CD4-positive, alpha-beta memory T cell (primary cell): ENCODE measurements at regions of chr18 and their contacts with region 1.

Region 1: GRCh38 chr18:48777026-48777743 is 173.6 kb downstream of the SMAD7 start:
- DNase-seq: peak; percentile 64 to 75 (median 70)
- H3K4me3 ChIP-seq: no peak overlapping the region
- H3K4me3 Mint-ChIP-seq: no peak overlapping the region
- H3K27ac ChIP-seq: no peak overlapping the region
- H3K27ac Mint-ChIP-seq: peak overlapping the region in 1 of 7 donors; percentile 74
- H3K4me1 ChIP-seq: peaks cover 10% of the 10 kb centered on the region
- H3K4me1 Mint-ChIP-seq: peaks cover 4 to 18% (median 5%) of the 10 kb centered on the region in 4 donors
- H3K27me3 ChIP-seq: no peaks in the 10 kb centered on the region
- H3K27me3 Mint-ChIP-seq: no peaks in the 10 kb centered on the region

Region 2: DNA sequence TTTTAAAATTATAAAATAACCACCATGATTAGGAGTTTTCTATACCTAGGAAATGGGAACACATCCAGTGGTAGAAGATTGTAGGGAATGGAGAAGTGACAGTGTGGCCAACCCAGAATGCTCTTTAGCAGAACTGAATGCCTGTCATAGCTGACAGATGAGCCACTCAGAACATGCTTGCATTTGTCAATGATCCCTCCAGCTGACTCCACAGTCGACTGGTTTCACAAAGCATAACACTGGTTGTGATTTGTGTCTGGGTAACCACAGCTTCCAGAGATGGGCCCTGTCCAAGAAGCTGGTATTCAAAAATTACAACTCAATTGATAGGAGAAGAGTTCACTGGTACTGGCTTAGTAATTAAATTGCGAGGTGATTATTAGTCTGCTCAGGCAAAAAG is 247.4 kb before region 1 on chr18:
- CTCF ChIA-PET with region 1: no interaction called
- POLR2A ChIA-PET with region 1: no interaction called
- intact Hi-C with region 1: no loop called
- DNase-seq: no peak
- H3K4me3 ChIP-seq: no peak overlapping the region
- H3K4me3 Mint-ChIP-seq: no peak overlapping the region
- H3K27ac ChIP-seq: no peak overlapping the region
- H3K27ac Mint-ChIP-seq: no peak overlapping the region
- H3K4me1 ChIP-seq: no peaks in the 10 kb centered on the region
- H3K4me1 Mint-ChIP-seq: peaks cover 0 to 5% (median under 1%) of the 10 kb centered on the region in 4 donors
- H3K27me3 ChIP-seq: no peaks in the 10 kb centered on the region
- H3K27me3 Mint-ChIP-seq: peaks cover 19 to 20% of the 10 kb centered on the region in 2 donors

Region 3: DNA sequence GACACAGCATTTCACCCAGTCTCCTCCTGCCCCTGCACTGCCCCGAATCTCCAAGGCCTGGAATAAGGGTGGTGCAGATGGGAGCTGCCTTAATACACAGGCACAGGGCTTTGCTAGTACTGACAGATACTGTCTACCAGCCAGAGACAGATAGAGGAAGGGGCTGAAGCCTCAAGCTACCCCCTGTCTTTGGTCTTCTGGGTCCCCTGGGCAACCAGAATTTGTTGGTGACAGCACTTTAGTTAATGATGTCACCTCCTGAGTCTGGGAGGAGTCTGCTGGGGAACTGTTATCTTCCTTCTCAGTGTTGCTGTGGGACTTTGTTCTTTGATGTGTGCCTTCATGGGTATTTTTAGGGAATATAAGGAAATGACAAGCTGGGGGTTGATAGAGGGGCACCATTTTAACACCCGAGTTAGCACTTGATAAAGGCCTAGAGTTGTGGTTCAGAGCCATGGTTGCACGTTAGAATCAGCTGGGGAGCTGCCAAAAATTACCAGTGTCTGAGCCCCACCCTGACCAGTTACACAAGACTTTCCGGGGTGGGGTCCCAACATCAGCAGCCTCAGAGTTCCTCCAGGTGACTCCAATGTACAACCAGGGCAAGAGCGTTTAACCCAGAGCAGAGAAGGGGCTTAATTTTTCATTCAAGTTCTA is 36.8 kb after region 1 on chr18:
- CTCF ChIA-PET with region 1: interaction called, 18 read pairs
- POLR2A ChIA-PET with region 1: interaction called, 8 read pairs
- intact Hi-C with region 1: no loop called
- DNase-seq: peak; percentile 71 to 86 (median 80)
- H3K4me3 ChIP-seq: no peak overlapping the region
- H3K4me3 Mint-ChIP-seq: peak overlapping the region; percentile 22 to 86 (median 59)
- H3K27ac ChIP-seq: peak overlapping the region; percentile 82
- H3K27ac Mint-ChIP-seq: peak overlapping the region; percentile 91 to 99 (median 97)
- H3K4me1 ChIP-seq: peaks cover 47% of the 10 kb centered on the region
- H3K4me1 Mint-ChIP-seq: peaks cover 41 to 66% (median 54%) of the 10 kb centered on the region in 4 donors
- H3K27me3 ChIP-seq: no peaks in the 10 kb centered on the region
- H3K27me3 Mint-ChIP-seq: no peaks in the 10 kb centered on the region

Region 4: GRCh38 chr18:48913201-48913600 is 136.0 kb after region 1 on chr18:
- CTCF ChIA-PET with region 1: interaction called, 127 read pairs
- POLR2A ChIA-PET with region 1: interaction called, 7 read pairs
- intact Hi-C with region 1: loop called (anchors 1 kb)
- DNase-seq: peak; percentile 56 to 68 (median 62)
- H3K4me3 ChIP-seq: no peak overlapping the region
- H3K4me3 Mint-ChIP-seq: no peak overlapping the region
- H3K27ac ChIP-seq: no peak overlapping the region
- H3K27ac Mint-ChIP-seq: peak overlapping the region in 3 of 7 donors; percentile 73 to 89 (median 81)
- H3K4me1 ChIP-seq: peaks cover 14% of the 10 kb centered on the region
- H3K4me1 Mint-ChIP-seq: peaks cover 16 to 48% (median 24%) of the 10 kb centered on the region in 4 donors
- H3K27me3 ChIP-seq: no peaks in the 10 kb centered on the region
- H3K27me3 Mint-ChIP-seq: peaks cover 0 to 1% of the 10 kb centered on the region in 2 donors

Region 5: GRCh38 chr18:49041435-49042245 is 264.5 kb after region 1 on chr18:
- CTCF ChIA-PET with region 1: interaction called, 58 read pairs
- POLR2A ChIA-PET with region 1: no interaction called
- intact Hi-C with region 1: loop called (anchors 1 kb)
- DNase-seq: peak in 4 of 5 donors; percentile 34 to 52 (median 42)
- H3K4me3 ChIP-seq: no peak overlapping the region
- H3K4me3 Mint-ChIP-seq: no peak overlapping the region
- H3K27ac ChIP-seq: no peak overlapping the region
- H3K27ac Mint-ChIP-seq: peak overlapping the region in 1 of 7 donors; percentile 8
- H3K4me1 ChIP-seq: no peaks in the 10 kb centered on the region
- H3K4me1 Mint-ChIP-seq: peaks cover 0 to 6% (median 0%) of the 10 kb centered on the region in 4 donors
- H3K27me3 ChIP-seq: no peaks in the 10 kb centered on the region
- H3K27me3 Mint-ChIP-seq: no peaks in the 10 kb centered on the region

Region 6: GRCh38 chr18:49238433-49239042 is 461.4 kb after region 1 on chr18:
- CTCF ChIA-PET with region 1: no interaction called
- POLR2A ChIA-PET with region 1: no interaction called
- intact Hi-C with region 1: loop called (anchors 2 kb)
- DNase-seq: peak in 3 of 5 donors; percentile 4 to 18 (median 11)
- H3K4me3 ChIP-seq: no peak overlapping the region
- H3K4me3 Mint-ChIP-seq: no peak overlapping the region
- H3K27ac ChIP-seq: no peak overlapping the region
- H3K27ac Mint-ChIP-seq: peak overlapping the region in 2 of 7 donors; percentile 2 to 13
- H3K4me1 ChIP-seq: no peaks in the 10 kb centered on the region
- H3K4me1 Mint-ChIP-seq: no peaks in the 10 kb centered on the region
- H3K27me3 ChIP-seq: no peaks in the 10 kb centered on the region
- H3K27me3 Mint-ChIP-seq: no peaks in the 10 kb centered on the region